ENCODE measurements at regions of chr1 and their contacts with region 1.

Region 1: DNA sequence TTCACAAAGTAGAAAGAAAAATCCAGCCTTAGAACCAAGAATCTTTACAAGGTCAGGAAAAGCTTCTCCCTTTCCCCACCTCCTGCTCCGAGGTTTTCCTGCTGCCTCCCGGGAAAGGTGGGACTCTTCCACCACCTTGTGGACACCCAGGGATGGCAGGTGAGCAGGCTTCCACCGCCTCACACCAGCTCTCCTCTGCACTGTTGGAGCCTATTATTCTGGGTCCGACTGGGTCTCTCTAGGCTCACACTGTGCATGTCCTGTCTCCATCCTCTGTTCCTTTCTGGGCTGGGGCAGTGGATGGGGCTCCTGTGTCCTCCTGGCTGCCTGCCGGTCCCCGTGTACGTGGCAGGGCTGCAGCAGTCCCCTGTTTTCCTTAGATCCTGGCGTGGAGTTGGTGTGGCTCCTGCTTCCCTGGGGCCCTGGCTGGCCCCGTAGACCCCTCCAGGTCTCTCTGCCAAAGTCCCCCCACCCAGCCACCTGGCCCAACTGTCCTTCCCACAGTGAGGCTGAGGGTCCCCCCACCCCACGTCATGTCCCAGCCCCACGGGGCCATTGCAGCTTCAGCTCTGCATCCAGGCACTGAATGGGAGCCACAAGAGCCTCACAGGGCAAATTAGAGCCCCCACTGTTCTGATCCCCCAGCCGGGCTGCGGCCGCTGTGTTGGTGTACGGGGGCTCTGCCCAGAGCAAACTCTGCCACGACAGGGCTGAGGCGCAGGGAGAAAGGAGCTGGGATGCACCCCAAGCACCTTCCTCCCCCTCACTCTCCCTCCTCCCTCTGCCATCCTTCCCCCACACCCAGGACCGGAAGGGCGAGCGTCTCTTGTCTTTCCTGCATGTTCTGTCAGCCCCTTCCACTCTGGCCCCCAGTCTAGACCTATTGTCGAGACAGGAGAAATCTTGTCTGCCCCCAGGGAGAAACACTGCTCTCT is 3.3 kb upstream of the SLC45A1 start:
- DNase-seq: peak; percentile 79
- ATAC-seq: peak; percentile 68

Region 2: DNA sequence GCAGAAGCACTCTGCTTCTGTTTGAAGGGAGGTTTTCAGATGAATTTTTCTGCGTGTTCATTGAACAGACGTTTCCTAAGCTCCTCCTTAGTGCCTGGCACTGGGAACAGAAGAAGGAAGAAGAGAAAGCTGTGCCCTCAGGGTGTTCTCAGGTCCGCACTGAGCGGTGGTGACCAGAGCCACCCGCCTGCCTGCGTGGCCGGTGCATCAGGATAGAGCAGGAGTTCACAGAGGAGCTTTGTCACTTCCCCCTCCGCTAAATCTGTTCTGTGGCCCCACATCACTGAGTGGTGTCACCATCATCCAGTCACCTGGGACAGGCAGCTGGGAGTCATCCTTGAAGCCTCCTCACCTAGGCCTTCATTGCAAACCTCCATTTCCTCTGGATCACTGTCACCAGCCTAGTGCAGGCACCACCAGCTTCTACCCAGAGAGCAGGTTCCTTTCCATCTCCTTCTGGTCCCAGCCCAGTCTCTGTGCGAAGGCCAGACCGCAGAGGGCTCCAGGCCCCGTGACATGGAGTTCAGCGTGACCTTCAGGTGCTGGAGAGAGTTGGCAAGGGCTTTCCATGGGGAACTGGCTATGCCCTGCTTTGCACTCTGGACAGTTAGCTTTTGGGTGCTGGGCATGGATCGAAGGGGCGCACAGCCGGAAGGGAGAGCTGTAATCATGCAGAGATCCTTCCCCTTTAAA is 331.4 kb before region 1 on chr1:
- intact Hi-C with region 1: loop called (anchors 2 kb)
- DNase-seq: no peak
- ATAC-seq: peak; percentile 62

Region 3: GRCh38 chr1:8169364-8170058 is 145.1 kb before region 1 on chr1:
- intact Hi-C with region 1: loop called (anchors 10 kb)
- DNase-seq: no peak
- ATAC-seq: peak; percentile 93

Region 4: GRCh38 chr1:8423650-8424538 is 109.3 kb after region 1 on chr1:
- intact Hi-C with region 1: no loop called
- DNase-seq: peak; percentile 80
- ATAC-seq: peak; percentile 33

Measured in Right ventricle myocardium inferior (tissue), 1 donor.